Heart left ventricle (tissue), 16 donors: ENCODE measurements at regions of chr2 and their contacts with region 1.

Region 1: GRCh38 chr2:233061591-233062450 is 1.7 kb downstream of the INPP5D start:
- DNase-seq: peak; percentile 63 to 83 (median 67)
- ATAC-seq: peak; percentile 44 to 77 (median 60)
- H3K4me3 ChIP-seq: peak overlapping the region in 11 of 12 donors; percentile 33 to 73 (median 57)
- H3K27ac ChIP-seq: peak overlapping the region; percentile 69 to 93 (median 88)
- H3K4me1 ChIP-seq: peaks cover 0 to 58% (median 34%) of the 10 kb centered on the region in 12 donors
- H3K27me3 ChIP-seq: no peaks in the 10 kb centered on the region
- CTCF ChIP-seq: peak in 6 of 12 donors; percentile 9 to 40 (median 22)
- POLR2A ChIP-seq: no peak

Region 2: GRCh38 chr2:233084488-233084887 is 22.7 kb after region 1 on chr2:
- intact Hi-C with region 1: loop called in 2 of 10 experiments (anchors 2 kb)
- DNase-seq: peak; percentile 70 to 79 (median 74)
- ATAC-seq: peak; percentile 77 to 90 (median 84)
- H3K4me3 ChIP-seq: peak overlapping the region in 3 of 12 donors; percentile 8 to 31 (median 15)
- H3K27ac ChIP-seq: peak overlapping the region; percentile 72 to 97 (median 84)
- H3K4me1 ChIP-seq: peaks cover 8 to 100% (median 30%) of the 10 kb centered on the region in 12 donors
- H3K27me3 ChIP-seq: no peaks in the 10 kb centered on the region
- CTCF ChIP-seq: no peak
- POLR2A ChIP-seq: no peak

Region 3: GRCh38 chr2:233178994-233179847 is 117.4 kb after region 1 on chr2:
- intact Hi-C with region 1: no loop called
- DNase-seq: peak in 1 of 5 donors; percentile 36
- ATAC-seq: peak in 3 of 4 donors; percentile 43 to 81 (median 72)
- H3K4me3 ChIP-seq: no peak overlapping the region
- H3K27ac ChIP-seq: no peak overlapping the region
- H3K4me1 ChIP-seq: no peaks in the 10 kb centered on the region
- H3K27me3 ChIP-seq: no peaks in the 10 kb centered on the region
- CTCF ChIP-seq: no peak
- POLR2A ChIP-seq: no peak